ENCODE measurements at regions of chr3 and their contacts with region 1.

Region 1: DNA sequence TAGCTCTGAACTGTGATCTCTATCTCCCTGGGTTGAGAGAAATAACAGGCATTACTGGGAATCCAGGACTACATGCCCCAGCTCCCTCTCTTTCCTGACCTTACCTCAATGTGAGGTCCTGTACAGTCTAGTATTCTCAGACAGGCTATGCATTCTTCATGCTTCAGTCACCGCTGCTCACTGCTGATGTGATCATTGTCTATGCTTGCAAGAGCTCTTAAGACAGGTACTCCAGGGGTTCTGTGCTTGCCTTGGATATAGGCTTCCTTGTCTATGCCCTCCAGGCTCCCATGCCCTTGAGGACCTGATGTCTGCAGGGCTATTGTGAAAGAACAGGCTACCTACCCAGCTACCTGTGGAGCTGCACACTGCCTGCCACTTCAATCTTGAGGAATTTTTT is 183.6 kb downstream of the MBNL1 start:
- DNase-seq: no peak
- H3K4me3 ChIP-seq: no peak overlapping the region
- H3K27ac ChIP-seq: no peak overlapping the region
- H3K4me1 ChIP-seq: no peaks in the 10 kb centered on the region
- H3K27me3 ChIP-seq: no peaks in the 10 kb centered on the region
- CTCF ChIP-seq: no peak

Region 2: DNA sequence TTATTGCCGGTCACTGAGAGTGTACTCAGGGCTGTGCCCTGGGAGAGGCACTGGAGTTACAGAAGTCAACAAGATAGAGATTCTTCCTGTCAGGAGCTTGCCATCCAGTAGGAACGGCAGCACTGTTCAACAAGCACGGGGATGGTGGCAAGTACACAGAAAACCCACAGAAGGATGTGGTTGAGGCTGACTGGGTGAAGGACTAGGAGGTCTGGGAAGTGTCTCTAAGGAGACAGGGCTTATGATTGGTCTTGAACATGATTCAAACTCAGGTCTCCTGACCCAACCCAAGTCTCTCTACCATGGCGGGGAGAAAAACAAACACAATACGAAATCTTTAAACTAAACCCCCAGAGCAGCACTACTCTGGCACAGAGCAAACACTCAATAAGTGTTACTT is 1786.2 kb before region 1 on chr3:
- CTCF ChIA-PET with region 1: interaction called, 12 read pairs
- POLR2A ChIA-PET with region 1: no interaction called
- intact Hi-C with region 1: no loop called
- DNase-seq: no peak
- H3K4me3 ChIP-seq: no peak overlapping the region
- H3K27ac ChIP-seq: no peak overlapping the region
- H3K4me1 ChIP-seq: no peaks in the 10 kb centered on the region
- H3K27me3 ChIP-seq: no peaks in the 10 kb centered on the region
- CTCF ChIP-seq: no peak

Region 3: DNA sequence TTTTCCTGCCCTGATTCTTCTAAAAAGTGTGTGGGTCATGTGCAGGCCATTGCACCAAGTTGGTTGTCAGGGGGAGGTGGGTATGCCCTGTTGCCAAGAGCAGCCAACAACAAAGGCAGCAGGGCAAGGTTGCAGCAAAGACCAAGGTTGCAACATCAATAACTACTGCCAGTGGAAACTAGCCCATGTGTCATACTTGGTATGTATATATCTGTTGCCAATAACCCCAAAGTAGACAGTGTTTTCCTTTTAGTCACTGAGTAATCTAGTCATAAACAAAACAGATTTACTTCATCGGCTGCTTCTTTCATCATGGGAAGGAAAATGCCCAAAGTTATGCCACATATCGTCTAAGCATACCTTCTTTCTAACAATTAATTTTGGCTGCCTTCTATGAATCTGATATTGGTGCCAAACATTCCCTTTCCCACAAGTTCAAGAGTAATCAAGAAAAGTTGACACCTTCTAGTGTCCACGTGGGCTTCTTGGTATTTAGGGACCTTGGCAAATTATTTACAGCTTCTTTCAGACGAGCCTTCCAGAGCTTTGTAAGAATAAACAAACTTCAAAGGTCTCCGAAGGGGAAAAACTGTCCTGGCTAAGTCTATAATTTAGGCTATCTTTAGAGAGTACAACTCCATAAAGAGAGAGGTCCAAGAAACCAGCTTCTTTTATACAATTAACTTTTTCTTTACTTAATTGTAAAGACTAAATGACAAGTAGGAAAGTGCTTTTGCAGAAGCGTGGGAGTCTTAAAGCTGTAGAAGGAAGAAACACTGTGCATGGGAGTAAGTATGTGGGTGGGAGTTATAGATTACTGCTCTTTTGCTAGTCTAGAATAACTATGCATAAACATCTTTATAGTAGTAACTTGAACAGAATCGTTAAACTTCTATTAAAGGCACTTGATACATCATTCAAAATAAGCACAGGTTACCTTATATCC is 193.6 kb before region 1 on chr3:
- CTCF ChIA-PET with region 1: no interaction called
- POLR2A ChIA-PET with region 1: no interaction called
- intact Hi-C with region 1: no loop called
- DNase-seq: peak; percentile 82 to 99
- H3K4me3 ChIP-seq: peak overlapping the region; percentile 22; the same call in 1 of the 2 replicates
- H3K27ac ChIP-seq: peak overlapping the region; percentile 54
- H3K4me1 ChIP-seq: peaks cover 26% of the 10 kb centered on the region
- H3K27me3 ChIP-seq: no peaks in the 10 kb centered on the region
- CTCF ChIP-seq: no peak

Measured in PC-9 (cell line).